B cell (primary cell): ENCODE measurements at regions of chr1 and their contacts with region 1.

Region 1: DNA sequence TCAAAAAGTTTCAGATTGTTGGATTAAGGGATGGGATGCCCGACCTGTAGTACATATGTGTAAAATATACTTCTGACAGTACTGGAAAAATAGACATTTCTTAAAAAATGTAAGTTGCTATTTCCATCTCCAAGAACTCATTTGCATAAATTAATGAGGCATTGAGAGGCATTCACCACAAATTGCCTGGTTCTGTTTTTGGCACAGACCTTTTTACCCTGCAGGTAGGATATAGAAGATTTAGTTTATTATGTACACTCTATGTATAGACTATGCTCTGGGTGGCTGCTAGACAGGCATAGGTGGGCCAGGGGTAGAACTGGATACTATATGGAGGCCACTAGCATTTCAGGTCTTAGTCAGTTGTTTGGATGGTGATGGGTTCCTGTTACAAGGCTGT is 8.0 kb downstream of the CCDC17 start:
- DNase-seq: peak; percentile 49
- ATAC-seq: peak; percentile 56
- H3K4me3 ChIP-seq: no peak overlapping the region
- H3K4me3 Mint-ChIP-seq: no peak overlapping the region
- H3K27ac ChIP-seq: no peak overlapping the region
- H3K27ac Mint-ChIP-seq: peak overlapping the region; percentile 59
- H3K4me1 ChIP-seq: peaks cover 12 to 16% of the 10 kb centered on the region in 2 donors
- H3K4me1 Mint-ChIP-seq: peaks cover 24% of the 10 kb centered on the region
- H3K27me3 ChIP-seq: no peaks in the 10 kb centered on the region
- H3K27me3 Mint-ChIP-seq: no peaks in the 10 kb centered on the region
- CTCF ChIP-seq: no peak

Region 2: GRCh38 chr1:45629035-45629434 is 13.2 kb after region 1 on chr1:
- CTCF ChIA-PET with region 1: no interaction called
- POLR2A ChIA-PET with region 1: no interaction called
- intact Hi-C with region 1: loop called (anchors 1 kb)
- DNase-seq: no peak
- ATAC-seq: no peak
- H3K4me3 ChIP-seq: no peak overlapping the region
- H3K4me3 Mint-ChIP-seq: no peak overlapping the region
- H3K27ac ChIP-seq: no peak overlapping the region
- H3K27ac Mint-ChIP-seq: no peak overlapping the region
- H3K4me1 ChIP-seq: no peaks in the 10 kb centered on the region
- H3K4me1 Mint-ChIP-seq: no peaks in the 10 kb centered on the region
- H3K27me3 ChIP-seq: no peaks in the 10 kb centered on the region
- H3K27me3 Mint-ChIP-seq: no peaks in the 10 kb centered on the region
- CTCF ChIP-seq: no peak

Region 3: GRCh38 chr1:45694823-45695222 is 78.9 kb after region 1 on chr1:
- CTCF ChIA-PET with region 1: no interaction called
- POLR2A ChIA-PET with region 1: no interaction called
- intact Hi-C with region 1: no loop called
- DNase-seq: no peak
- ATAC-seq: no peak
- H3K4me3 ChIP-seq: no peak overlapping the region
- H3K4me3 Mint-ChIP-seq: no peak overlapping the region
- H3K27ac ChIP-seq: no peak overlapping the region
- H3K27ac Mint-ChIP-seq: no peak overlapping the region
- H3K4me1 ChIP-seq: no peaks in the 10 kb centered on the region
- H3K4me1 Mint-ChIP-seq: peaks cover 6% of the 10 kb centered on the region
- H3K27me3 ChIP-seq: no peaks in the 10 kb centered on the region
- H3K27me3 Mint-ChIP-seq: no peaks in the 10 kb centered on the region
- CTCF ChIP-seq: no peak